ENCODE measurements at regions of chr10 and their contacts with region 1.

Region 1: DNA sequence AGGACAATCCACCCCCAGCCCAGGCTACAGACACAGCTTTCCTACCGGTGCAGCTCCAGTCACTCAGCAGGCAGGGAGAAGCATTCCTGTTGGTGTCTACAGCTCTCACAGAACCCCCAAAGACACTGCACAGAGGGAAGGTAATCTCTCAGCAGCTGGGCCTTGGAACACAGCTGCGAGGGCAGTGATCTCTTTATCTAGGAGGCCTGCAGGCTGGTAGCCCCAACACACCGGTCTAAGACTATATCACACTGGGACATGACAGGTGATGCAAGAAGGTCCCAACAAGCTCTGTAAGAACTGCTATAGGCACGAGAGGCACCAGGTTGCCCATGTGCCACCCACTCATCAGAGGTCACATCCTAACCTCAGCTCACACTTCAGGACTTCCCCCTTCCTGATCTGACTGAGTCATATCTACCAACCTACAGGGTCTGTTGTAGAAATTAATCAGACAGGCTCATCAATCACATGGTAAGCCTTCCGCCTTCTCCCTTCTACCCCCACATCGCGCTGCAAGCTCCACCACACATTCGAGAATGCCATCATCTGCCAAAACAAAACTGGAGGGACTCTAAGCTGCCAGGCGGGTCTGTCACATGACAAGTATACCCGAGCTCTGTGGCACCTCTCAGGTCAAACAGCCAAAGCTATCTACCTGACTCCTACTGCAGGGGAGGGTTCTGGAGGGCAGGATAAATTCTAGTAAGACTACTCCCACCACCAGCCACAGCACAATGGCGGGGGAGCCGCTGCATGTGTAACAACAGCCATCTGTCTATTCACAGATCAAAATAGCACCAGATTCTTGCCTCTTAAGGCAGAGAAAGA is 26.1 kb downstream of the FAM53B start:
- DNase-seq: peak; percentile 64
- H3K4me3 Mint-ChIP-seq: peak overlapping the region; percentile 73
- H3K27ac Mint-ChIP-seq: peak overlapping the region; percentile 79
- H3K4me1 Mint-ChIP-seq: peaks cover 88% of the 10 kb centered on the region
- H3K27me3 Mint-ChIP-seq: peaks cover 6% of the 10 kb centered on the region

Region 2: GRCh38 chr10:124614003-124614659 is 104.0 kb before region 1 on chr10:
- intact Hi-C with region 1: loop called (anchors 1 kb)
- DNase-seq: peak; percentile 41
- H3K4me3 Mint-ChIP-seq: no peak overlapping the region
- H3K27ac Mint-ChIP-seq: no peak overlapping the region
- H3K4me1 Mint-ChIP-seq: peaks cover 40% of the 10 kb centered on the region
- H3K27me3 Mint-ChIP-seq: peaks cover 2% of the 10 kb centered on the region

Region 3: DNA sequence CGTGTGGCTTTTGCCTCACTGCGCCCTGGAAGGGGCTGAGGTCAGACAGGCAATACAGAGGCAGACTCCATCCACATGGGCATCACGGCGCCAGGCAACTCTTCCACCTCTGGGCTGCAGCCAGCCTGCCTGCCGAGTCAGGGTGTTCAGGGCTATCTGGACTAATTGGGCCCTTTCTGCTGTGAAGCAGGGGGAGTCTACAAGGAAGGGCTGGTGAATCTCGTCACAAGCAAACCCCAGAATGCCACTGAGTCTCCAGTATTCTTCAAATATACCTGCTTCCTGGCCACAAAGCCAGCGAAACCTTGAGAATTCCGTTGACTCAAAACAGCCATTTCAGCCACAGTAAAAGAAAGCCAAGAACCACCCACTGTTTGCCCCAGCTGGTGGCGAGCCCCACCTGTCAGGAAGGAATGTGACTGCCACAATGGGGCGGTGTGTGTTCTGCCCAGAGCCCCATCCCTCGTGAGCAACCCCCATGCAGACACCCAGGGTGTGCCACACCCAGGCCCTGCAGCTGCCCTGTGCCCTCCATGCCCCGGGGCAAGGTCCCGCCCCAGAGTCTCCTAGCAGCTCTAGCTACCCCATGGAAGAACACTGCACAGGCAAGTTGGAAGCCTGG is 91.3 kb before region 1 on chr10:
- intact Hi-C with region 1: loop called (anchors 1 kb)
- DNase-seq: peak; percentile 42
- H3K4me3 Mint-ChIP-seq: peak overlapping the region; percentile 42
- H3K27ac Mint-ChIP-seq: peak overlapping the region; percentile 45
- H3K4me1 Mint-ChIP-seq: peaks cover 31% of the 10 kb centered on the region
- H3K27me3 Mint-ChIP-seq: peaks cover 13% of the 10 kb centered on the region

Region 4: GRCh38 chr10:124647421-124648130 is 70.5 kb before region 1 on chr10:
- intact Hi-C with region 1: loop called (anchors 1 kb)
- DNase-seq: peak; percentile 67
- H3K4me3 Mint-ChIP-seq: peak overlapping the region; percentile 45
- H3K27ac Mint-ChIP-seq: peak overlapping the region; percentile 85
- H3K4me1 Mint-ChIP-seq: peaks cover 78% of the 10 kb centered on the region
- H3K27me3 Mint-ChIP-seq: no peaks in the 10 kb centered on the region

Region 5: DNA sequence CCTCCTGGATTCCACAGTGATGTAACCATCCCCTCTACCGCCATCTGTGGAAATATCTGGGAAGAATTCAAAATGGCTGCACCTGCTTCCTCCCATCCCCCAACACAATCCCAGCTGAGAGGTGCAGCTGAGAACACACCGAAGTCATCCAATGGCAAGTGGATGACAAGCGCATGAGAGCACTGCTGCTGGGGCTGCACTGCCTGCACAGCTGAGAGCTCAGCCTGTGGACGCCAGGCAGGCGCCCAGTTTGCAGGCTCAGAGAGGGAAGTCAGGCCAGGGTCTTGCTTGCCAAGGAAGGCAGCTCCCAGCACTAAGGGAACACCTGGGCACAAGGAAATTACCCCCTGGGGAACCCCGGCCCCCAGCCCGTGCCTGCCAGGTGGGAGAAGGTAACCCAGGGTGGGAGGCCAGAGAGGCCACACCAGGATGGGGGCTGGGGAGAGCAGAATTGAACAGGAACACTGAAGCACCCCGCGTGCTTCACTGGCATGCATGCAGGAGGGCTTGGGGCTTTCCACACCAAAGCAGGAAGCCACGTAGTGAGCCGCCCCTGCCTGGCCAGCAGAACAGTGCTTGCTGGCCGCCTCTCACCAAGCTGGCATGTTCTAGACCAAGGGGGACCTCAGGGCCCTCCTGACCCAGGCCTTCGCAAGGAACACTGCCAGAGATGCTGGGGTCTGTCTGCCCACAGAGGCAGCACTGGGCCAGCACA is 20.1 kb before region 1 on chr10:
- intact Hi-C with region 1: loop called (anchors 1 kb)
- DNase-seq: peak; percentile 52
- H3K4me3 Mint-ChIP-seq: peak overlapping the region; percentile 76
- H3K27ac Mint-ChIP-seq: peak overlapping the region; percentile 98
- H3K4me1 Mint-ChIP-seq: peaks cover 96% of the 10 kb centered on the region
- H3K27me3 Mint-ChIP-seq: no peaks in the 10 kb centered on the region

Region 6: DNA sequence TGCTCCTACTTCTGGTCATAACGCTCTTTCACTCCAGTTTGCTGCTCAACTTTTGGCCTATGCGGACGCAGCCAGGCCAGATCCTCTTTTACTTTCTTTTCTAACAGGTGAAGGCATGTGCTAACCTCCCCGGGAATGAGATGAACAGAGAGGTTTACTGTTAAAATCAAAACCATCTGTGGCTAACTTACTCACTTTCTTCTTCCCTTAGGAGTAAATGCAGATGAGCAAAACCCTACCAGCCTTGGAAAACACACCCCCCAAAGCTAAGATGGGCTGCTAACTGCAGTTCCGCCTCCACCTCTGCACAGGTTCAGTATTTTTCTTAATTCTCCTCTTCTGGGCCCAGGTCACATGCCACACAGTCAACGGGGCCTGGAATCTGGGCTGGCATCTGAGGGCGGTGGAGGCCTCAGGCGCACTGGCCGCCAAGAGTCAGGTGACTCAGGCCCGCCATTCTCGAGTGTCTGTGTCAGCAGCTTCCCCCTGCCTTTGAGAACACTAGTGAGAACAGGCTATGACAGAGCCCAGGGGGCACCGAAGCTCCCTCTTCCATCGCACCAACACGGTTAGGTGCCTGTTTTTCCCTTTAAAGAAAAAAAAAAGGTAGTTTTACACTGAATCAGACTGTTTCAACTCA is 14.9 kb after region 1 on chr10:
- intact Hi-C with region 1: loop called (anchors 1 kb)
- DNase-seq: peak; percentile 32
- H3K4me3 Mint-ChIP-seq: peak overlapping the region; percentile 53
- H3K27ac Mint-ChIP-seq: peak overlapping the region; percentile 80
- H3K4me1 Mint-ChIP-seq: peaks cover 59% of the 10 kb centered on the region
- H3K27me3 Mint-ChIP-seq: peaks cover 2% of the 10 kb centered on the region

Region 7: GRCh38 chr10:124791378-124792348 is 73.5 kb after region 1 on chr10 and contains the start of gene EEF1AKMT2:
- intact Hi-C with region 1: no loop called
- DNase-seq: peak; percentile 78
- H3K4me3 Mint-ChIP-seq: peak within 1 kb of the TSS; percentile 94
- H3K27ac Mint-ChIP-seq: peak within 1 kb of the TSS; percentile 92
- H3K4me1 Mint-ChIP-seq: peaks cover 24% of the 10 kb centered on the region
- H3K27me3 Mint-ChIP-seq: peaks cover 3% of the 10 kb centered on the region
- total RNA-seq, gene EEF1AKMT2: 20.5 and 21.3 TPM in 2 replicates

Measured in activated T-helper 1 cell treated with anti-CD3 and anti-CD28 coated beads, Interleukin-12 subunit alpha, Interleukin-12 subunit beta, Interleukin-2, Interleukin-4 antibody, amounts not matched to agents 30 ng/mL and 10 ng/mL and 1 ng/mL, durations not matched to agents 14 hours and 24 hours and 36 hours (primary cell).